ENCODE measurements at regions of chr20 and their contacts with region 1.

Region 1: GRCh38 chr20:25390538-25391528 is at the start of gene ABHD12:
- DNase-seq: peak; percentile 96
- CTCF ChIP-seq: no peak

Region 2: DNA sequence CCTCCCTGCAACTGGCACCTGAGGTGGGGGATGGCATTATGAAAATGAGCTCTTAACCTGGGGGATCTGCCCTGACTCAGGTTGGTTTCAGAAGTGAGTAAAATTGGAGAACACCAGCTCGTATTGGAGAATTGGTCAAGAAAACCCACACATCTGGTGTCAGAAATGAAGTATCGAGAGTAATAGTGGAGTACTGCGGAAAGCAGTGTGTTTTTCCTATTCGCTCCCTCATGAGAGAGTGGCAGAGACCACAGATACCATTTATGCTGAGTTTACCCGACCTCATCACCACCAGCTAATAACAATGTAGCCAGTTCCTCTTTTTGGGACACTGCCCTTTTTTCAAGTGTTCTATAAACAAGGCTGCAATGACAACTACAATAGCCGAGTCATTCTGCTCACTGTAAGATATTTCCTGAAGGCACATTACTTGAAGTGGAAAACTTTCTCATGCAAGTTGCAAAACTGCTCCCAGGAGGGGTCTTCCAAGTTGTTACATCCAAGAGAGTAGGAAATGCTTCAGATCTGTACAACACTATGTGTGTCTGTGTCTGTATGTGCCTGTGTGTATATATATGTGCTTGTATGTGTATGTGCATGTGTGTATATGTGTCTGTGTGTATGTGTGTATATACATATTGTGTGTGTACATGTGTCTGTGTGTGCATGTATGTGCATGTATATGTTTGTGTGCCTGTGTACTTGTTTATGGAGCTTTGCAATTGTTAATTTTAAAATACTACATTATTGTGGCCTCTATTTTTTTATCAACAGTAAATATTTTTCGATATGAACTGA is 547.7 kb before region 1 on chr20:
- in situ Hi-C with region 1: no loop called
- DNase-seq: peak; percentile 51
- CTCF ChIP-seq: no peak

Region 3: GRCh38 chr20:25195014-25195961 is 195.5 kb before region 1 on chr20 and contains the start of gene ENTPD6:
- in situ Hi-C with region 1: loop called (anchors 25 kb)
- DNase-seq: peak; percentile 98
- CTCF ChIP-seq: peak; percentile 2

Region 4: GRCh38 chr20:25233016-25233820 is 157.6 kb before region 1 on chr20:
- in situ Hi-C with region 1: no loop called
- DNase-seq: no peak
- CTCF ChIP-seq: no peak

Region 5: DNA sequence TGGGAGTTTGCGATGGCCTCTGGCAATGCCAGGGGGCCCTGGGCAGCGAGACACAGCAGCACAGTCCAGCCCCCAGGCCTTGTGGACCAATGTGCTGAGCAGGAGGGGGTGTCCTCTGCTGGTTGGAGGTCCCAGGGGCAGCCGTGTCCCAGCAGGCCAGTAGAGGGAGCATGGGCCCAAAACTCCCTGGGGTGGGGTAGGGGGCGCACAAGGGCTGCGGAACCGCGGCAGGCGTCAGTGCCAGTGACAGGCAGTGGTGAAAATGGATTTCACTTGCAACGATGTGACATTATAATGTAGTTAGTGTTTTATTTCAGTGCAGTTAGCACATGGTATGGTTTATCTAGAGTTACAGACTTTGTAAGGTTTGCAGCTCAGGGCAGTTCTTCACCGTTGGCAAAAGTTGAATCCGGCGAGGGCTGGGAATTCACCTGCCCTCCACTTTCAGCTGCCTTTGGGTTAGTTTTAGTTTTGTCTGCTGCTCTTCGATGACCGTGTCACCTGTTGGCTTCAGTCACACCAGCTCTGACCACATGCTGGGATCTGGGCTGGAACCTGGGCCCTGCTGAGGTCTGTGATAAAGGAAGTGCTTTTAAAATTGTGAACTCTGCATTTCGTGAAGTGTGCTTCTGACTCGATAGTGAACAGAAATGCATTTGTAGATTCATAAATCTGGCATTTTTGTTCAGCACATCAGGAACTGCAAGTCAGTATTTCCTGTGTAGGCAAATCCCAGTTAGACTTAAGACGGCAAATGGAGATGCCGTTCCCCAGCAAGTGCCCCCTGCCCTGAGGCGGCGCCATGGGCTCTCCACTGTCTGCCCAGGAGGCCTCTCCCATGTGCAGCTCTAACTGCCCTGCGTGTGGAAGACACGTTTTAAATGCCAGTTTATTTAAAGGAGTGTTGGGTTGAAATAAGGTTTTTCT is 96.1 kb before region 1 on chr20:
- in situ Hi-C with region 1: loop called (anchors 10 kb)
- DNase-seq: peak; percentile 88
- CTCF ChIP-seq: peak; percentile 86